GM10248 (cell line): ENCODE measurements at regions of chr15 and their contacts with region 1.

Region 1: DNA sequence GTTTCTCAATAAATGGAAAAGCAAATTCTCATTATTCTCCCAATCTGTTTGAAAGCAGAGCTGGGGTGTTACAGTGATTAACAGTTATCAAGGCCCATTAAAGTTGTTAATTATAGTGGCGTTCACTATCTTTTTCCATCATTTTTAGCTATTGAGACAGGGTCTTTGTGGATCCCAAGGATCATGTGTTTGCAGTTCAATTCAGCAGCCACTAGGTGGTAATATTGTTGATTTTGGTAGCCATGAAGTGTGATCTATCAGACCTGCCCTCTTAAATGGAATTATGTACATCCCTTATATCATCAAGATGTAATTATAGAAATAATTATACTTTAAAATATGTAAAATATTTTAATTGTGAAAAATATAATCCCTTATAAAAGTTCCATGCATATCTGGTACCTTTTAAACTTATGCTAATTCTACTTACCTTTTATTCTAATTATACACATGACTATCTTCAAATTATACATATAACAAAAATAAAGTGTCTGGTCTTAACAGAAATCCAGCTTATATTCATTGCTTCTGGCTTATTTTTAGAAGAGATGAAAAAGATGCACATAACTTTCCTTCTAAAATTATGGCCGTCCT is 126.4 kb downstream of the GREM1 start:
- DNase-seq: peak; percentile 33
- CTCF ChIP-seq: peak; percentile 59

Region 2: DNA sequence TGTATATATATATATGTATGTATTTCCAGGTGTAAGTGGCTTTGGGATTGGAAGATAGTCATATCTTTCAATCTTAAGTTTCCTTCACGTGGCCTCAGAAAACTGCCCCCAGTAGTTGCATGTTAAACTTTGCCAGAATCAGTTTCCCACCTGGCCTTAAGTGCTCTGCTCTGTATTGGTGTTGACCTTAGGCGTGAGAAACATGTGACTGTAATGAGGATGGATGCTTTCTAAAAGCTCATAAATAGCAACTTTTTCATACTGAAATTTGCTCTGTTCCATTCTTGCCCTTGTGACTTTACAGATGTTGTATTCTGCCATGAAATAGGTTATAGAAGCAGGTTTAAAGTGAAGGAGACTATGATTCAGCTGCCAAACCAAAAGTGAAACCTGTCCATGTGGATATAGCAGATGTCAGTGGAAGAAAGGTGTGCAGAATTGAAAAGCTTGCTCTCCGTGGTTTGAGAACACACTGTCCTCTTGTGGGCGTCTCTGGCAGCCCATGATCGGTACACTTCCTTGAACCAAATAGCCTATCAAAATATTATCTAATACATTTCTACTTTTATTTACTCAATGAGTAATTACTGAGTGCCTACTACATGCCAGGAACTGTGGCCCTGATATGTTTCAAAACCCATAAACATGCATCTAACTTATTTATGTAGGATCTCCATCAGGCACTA is 186.9 kb before region 1 on chr15:
- CTCF ChIA-PET with region 1: interaction called, 11 read pairs
- POLR2A ChIA-PET with region 1: no interaction called
- DNase-seq: peak; percentile 37
- CTCF ChIP-seq: peak; percentile 35

Region 3: GRCh38 chr15:32834156-32834555 is 10.1 kb before region 1 on chr15:
- CTCF ChIA-PET with region 1: interaction called, 54 read pairs
- POLR2A ChIA-PET with region 1: no interaction called
- DNase-seq: peak; percentile 38
- CTCF ChIP-seq: no peak

Region 4: DNA sequence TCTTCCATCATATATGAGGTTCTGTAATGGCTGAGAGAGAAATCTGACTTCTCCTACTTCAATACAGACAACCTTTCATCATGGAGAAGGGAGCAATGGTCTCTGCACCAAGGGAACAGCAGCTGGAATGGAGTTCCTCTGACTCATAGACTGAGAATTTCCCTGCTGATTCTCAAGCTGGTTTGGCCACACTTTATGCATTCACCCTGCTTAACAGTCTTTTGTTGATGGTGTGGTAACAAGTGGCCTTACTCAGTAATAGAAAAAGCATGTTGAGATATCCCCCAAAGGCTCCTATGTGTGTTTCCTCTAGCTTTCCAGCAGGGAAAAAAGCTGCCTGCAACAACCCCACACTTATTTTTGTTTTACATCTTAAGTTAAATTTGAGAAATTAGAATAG is 11.7 kb after region 1 on chr15:
- CTCF ChIA-PET with region 1: interaction called, 20 read pairs
- POLR2A ChIA-PET with region 1: no interaction called
- DNase-seq: no peak
- CTCF ChIP-seq: no peak

Region 5: GRCh38 chr15:32936283-32936918 is 92.2 kb after region 1 on chr15:
- CTCF ChIA-PET with region 1: interaction called, 38 read pairs
- POLR2A ChIA-PET with region 1: no interaction called
- DNase-seq: peak; percentile 22
- CTCF ChIP-seq: peak; percentile 25

Region 6: GRCh38 chr15:32956006-32956405 is 111.8 kb after region 1 on chr15:
- CTCF ChIA-PET with region 1: interaction called, 10 read pairs
- POLR2A ChIA-PET with region 1: interaction called, 4 read pairs
- DNase-seq: peak; percentile 40
- CTCF ChIP-seq: peak; percentile 36

Region 7: GRCh38 chr15:32994810-32995424 is 150.7 kb after region 1 on chr15:
- CTCF ChIA-PET with region 1: interaction called, 16 read pairs
- POLR2A ChIA-PET with region 1: no interaction called
- DNase-seq: peak; percentile 12
- CTCF ChIP-seq: peak; percentile 33

Region 8: DNA sequence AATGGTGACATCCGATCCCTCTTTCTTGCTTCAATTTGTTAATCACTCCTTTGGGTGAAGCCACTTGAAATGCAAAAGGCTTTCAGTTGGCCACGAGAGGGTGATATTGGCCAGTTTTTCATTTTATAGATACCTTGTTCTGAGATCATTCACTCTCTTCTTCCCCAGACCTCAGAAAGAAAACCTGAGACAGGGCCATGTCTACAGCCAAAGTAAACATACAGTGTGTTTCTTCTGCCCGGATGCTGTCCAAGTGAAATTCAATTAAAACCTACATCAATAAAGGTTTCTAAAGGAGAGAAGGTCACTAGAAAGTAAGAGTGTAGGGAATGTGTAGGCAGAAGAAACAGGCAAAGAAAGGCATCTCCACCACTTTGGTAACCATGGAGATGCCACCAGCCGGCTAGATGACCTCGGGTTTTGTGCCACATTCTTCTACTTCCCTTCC is 389.8 kb after region 1 on chr15:
- CTCF ChIA-PET with region 1: no interaction called
- POLR2A ChIA-PET with region 1: no interaction called
- DNase-seq: no peak
- CTCF ChIP-seq: peak; percentile 40